ENCODE measurements at regions of chr3 and their contacts with region 1.

Region 1: DNA sequence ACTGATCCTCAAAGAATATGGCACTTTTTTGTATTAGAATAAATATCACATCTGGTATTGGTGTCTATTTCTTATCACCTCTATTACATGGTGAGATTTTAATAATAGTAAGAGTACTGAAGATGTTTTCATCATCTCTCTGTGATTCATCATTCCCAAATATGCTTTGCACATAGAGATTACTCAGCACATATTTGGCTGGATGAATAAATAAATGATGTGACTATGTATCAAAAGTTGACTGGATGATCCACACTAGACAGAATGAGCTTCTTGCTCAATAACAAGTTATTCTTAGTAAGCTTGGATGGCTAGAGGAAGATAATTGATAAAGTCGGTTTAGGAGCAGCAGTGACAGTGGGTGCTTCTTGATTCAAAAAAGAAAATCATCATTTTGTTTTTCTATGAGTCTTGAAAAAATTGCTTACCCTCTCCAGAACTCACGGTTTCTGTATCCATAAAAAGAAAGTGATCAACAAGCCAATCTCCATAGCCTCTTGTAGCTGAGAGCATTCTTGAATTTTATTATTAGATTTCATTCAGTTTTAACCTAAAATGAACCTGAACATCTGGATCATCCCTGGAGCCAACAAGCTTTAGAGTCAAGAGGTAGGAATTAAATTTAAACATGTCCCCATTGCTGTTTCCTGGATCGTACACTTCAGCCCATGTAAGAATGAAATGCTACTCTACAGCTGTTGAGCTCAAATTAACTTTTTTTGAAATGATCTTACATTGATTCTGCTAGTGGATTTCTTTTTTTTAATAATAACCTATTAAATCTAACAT is 104.8 kb upstream of the OSTN start:
- DNase-seq: peak; percentile 89
- ATAC-seq: peak; percentile 87
- H3K4me3 ChIP-seq: no peak overlapping the region
- H3K27ac ChIP-seq: no peak overlapping the region
- H3K4me1 ChIP-seq: peaks cover 1% of the 10 kb centered on the region; the same call in 1 of the 2 replicates
- H3K27me3 ChIP-seq: no peaks in the 10 kb centered on the region
- CTCF ChIP-seq: no peak
- POLR2A ChIP-seq: no peak
- RAD21 ChIP-seq: no peak

Region 2: DNA sequence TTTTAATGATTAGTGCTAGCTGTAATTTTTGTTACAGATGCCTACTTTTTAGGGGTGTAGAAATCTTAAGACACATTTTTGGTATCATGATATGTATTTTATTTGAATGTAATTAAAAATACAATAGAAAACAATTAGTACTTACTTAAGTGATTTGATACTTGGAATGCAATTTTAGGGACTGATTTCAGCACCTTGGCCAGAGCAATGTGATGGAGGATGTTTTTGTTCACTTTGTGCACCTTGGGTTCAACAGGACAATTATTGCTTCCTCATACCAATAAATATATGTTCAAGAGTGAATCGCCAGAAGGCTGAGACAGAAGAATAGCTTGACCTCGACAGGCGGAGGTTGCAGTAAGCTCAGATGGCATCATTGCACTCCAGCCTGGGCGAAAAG is 254.1 kb before region 1 on chr3:
- CTCF ChIA-PET with region 1: no interaction called
- POLR2A ChIA-PET with region 1: no interaction called
- dilution Hi-C with region 1: no loop called
- in situ Hi-C with region 1: no loop called
- intact Hi-C with region 1: loop called (anchors 1 kb)
- DNase-seq: peak; percentile 2
- ATAC-seq: no peak
- H3K4me3 ChIP-seq: no peak overlapping the region
- H3K27ac ChIP-seq: no peak overlapping the region
- H3K4me1 ChIP-seq: no peaks in the 10 kb centered on the region
- H3K27me3 ChIP-seq: no peaks in the 10 kb centered on the region
- CTCF ChIP-seq: no peak
- POLR2A ChIP-seq: no peak
- RAD21 ChIP-seq: no peak

Region 3: DNA sequence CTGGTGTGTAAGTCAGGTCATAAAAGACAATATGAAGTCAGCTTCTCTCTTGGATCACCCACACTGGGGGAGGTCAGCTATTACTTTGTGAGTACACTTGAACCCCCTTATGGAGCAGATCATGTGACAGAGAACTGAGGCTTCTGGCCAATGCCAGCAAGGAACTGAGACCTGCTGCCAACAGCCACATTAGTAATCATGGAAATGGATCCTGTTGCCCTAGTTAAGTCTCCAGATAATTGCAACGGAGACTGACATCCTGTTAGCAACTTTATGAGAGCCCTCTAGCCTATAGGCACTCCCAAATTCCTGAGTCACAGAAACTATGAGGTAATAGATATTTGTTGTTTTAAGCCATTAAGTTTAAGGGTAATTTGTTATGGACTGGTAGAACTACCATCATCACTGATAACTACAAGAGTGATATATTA is 121.4 kb before region 1 on chr3:
- CTCF ChIA-PET with region 1: no interaction called
- POLR2A ChIA-PET with region 1: no interaction called
- dilution Hi-C with region 1: no loop called
- in situ Hi-C with region 1: no loop called
- intact Hi-C with region 1: no loop called
- DNase-seq: no peak
- ATAC-seq: no peak
- H3K4me3 ChIP-seq: no peak overlapping the region
- H3K27ac ChIP-seq: no peak overlapping the region
- H3K4me1 ChIP-seq: 0 out of 2 replicates have a peak, but pooled peaks cover 1% of the 10 kb centered on the region
- H3K27me3 ChIP-seq: no peaks in the 10 kb centered on the region
- CTCF ChIP-seq: no peak
- POLR2A ChIP-seq: no peak
- RAD21 ChIP-seq: no peak

Region 4: DNA sequence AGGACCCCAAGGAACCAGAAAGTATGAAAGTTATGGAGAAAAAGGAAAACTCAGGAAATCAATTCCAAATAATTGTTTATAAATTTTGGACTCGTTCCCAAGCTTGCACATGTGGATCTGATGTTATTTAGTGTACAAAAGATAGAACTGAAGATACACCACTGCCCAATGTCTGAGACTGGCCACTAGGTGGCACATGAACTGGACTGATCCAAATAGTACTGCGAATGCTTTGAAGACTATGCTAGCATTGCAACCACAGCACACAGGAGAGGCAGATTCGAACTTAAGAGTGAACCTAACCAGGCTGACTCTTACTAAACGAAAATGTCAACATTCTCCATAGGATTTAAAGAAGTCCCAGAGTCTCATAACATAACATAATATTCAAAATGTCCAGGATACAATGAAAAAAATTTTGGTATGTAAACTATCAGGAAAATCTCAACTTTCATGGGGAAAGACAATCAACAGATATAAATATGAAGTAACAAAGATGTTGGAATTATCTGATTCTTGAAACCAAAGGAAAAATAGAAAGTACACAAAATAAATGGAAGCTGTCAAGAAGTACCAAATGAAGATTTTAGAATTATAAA is 1036.4 kb after region 1 on chr3:
- CTCF ChIA-PET with region 1: no interaction called
- POLR2A ChIA-PET with region 1: no interaction called
- dilution Hi-C with region 1: no loop called
- in situ Hi-C with region 1: no loop called
- intact Hi-C with region 1: loop called (anchors 10 kb)
- DNase-seq: peak; percentile 2
- ATAC-seq: no peak
- H3K4me3 ChIP-seq: no peak overlapping the region
- H3K27ac ChIP-seq: no peak overlapping the region
- H3K4me1 ChIP-seq: no peaks in the 10 kb centered on the region
- H3K27me3 ChIP-seq: no peaks in the 10 kb centered on the region
- CTCF ChIP-seq: 0 out of 2 replicates have a peak, but pooled peaks have one; percentile 5
- POLR2A ChIP-seq: no peak
- RAD21 ChIP-seq: no peak

Measured in IMR-90 (cell line).